ENCODE measurements at regions of chr1 and their contacts with region 1.

Region 1: GRCh38 chr1:33127001-33127791 is 46.2 kb downstream of the AZIN2 start:
- DNase-seq: peak; percentile 99
- H3K4me3 Mint-ChIP-seq: peak overlapping the region; percentile 96
- H3K27ac Mint-ChIP-seq: peak overlapping the region; percentile 96
- H3K4me1 Mint-ChIP-seq: peaks cover 45% of the 10 kb centered on the region
- H3K27me3 Mint-ChIP-seq: no peaks in the 10 kb centered on the region

Region 2: DNA sequence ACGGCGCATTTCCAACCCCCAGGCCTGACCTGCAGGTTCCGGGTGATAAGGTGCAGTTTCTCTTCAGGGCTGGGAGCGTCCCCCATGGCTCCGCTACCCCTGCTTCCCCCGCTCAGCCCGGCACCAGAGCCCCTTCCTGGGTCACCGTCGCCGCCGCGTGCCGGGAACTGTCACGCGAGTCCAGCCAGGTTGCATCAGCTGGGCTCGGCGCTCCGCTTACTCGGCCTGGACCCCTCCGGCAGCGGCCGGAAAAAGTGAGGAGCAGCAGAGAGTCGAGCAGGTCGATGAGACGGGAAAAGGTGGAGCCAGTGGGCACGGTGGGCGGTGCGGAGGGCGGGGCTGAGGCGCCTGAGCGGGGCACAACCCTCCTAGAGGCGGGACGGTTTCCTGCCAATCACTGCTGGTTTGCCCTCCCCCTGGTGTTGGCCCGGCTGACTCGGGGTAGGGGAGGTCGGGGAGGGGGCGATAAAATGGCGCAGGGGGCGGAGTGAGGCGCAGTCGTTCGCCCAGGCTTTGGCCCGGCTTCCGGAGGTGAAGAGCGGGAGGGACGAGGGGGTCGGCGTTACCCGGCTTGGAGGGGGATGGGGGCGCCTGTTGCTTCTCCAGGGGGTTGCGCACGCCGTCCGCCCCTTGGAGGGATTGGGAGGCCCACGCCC is 309.9 kb before region 1 on chr1 and contains the starts of genes S100PBP and YARS1:
- intact Hi-C with region 1: loop called (anchors 1 kb)
- DNase-seq: peak; percentile 100
- H3K4me3 Mint-ChIP-seq: peak within 1 kb of the TSS; percentile 97
- H3K27ac Mint-ChIP-seq: peak within 1 kb of the TSS; percentile 97
- H3K4me1 Mint-ChIP-seq: peaks cover 53% of the 10 kb centered on the region
- H3K27me3 Mint-ChIP-seq: no peaks in the 10 kb centered on the region
- total RNA-seq, gene S100PBP: 48.8 and 55.8 TPM in 2 replicates
- total RNA-seq, gene YARS1: 205 and 225 TPM in 2 replicates

Region 3: DNA sequence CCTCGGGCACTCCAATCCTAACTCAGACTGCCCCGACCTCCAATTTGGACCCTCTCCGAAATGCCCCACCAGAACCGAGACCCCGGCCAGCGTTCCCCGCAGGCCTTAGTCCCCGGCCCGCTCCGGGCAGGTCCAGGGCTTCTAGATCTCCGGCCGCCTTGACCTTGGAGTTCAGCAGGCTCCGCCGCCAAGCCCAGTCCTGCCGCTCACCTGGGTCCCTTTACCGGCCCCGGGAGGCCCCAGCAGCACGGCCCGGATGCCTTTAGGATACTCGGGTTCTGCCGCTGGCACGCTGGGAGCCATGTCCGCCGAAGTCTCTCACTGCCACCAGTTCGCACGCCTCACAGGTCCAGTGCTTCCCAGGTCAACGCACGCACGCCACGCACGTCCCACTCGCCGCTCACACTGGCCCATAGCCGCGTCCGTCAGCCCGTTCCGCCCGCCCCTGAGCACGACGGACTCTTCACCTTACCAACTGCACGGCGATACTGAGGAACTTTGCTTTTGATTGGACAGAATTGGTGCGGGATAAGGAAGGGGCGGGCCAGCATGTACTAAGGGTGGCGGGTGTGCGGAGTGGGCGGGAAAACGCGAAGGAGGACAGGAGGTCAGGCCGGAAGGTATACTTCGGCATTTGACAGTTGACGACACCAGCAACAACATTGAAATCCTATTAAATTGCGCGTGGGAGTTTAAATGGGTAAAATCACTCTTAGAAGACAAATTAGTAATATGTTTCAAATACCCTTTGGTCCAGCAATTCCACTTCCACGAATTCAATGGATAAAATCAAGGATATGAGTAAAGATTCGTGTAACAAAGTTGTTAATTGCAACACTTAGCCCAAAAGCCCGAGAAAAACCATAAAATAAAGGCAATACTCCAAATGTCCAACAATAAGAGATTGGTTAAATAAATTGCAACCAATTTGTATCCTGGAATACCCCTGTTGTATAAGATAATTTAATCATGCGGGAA is 90.4 kb before region 1 on chr1 and contains the start of gene AK2:
- intact Hi-C with region 1: loop called (anchors 1 kb)
- DNase-seq: peak; percentile 91
- H3K4me3 Mint-ChIP-seq: peak within 1 kb of the TSS; percentile 91
- H3K27ac Mint-ChIP-seq: peak within 1 kb of the TSS; percentile 90
- H3K4me1 Mint-ChIP-seq: peaks cover 48% of the 10 kb centered on the region
- H3K27me3 Mint-ChIP-seq: no peaks in the 10 kb centered on the region
- total RNA-seq, gene AK2: 387 and 400 TPM in 2 replicates

Region 4: DNA sequence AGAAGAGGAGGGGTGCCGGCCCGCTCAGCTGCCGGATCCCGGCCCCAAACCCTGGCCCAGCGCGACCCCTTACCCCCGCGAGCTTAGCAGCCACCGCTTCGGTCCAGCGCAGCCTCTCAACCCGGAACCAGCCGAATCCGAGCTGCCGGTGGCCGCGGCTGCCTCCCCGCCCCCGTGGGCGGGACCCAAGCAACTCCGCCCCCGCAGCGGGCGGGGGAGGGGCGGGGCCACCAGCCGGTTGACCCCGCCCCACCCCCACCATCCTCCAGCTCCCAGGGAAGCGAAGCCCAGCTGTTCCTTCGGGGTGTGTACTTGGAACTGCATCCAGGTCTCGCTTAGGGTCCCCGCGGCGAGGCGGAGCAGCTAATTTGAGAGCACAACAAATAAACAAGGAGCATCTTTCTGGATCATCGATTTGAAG is 54.7 kb after region 1 on chr1 and contains the start of gene TRIM62:
- intact Hi-C with region 1: loop called (anchors 1 kb)
- DNase-seq: peak; percentile 69
- H3K4me3 Mint-ChIP-seq: peak within 1 kb of the TSS; percentile 87
- H3K27ac Mint-ChIP-seq: peak within 1 kb of the TSS; percentile 81
- H3K4me1 Mint-ChIP-seq: peaks cover 28% of the 10 kb centered on the region
- H3K27me3 Mint-ChIP-seq: peaks cover 19% of the 10 kb centered on the region
- total RNA-seq, gene TRIM62: 4.1 and 4.5 TPM in 2 replicates

Region 5: DNA sequence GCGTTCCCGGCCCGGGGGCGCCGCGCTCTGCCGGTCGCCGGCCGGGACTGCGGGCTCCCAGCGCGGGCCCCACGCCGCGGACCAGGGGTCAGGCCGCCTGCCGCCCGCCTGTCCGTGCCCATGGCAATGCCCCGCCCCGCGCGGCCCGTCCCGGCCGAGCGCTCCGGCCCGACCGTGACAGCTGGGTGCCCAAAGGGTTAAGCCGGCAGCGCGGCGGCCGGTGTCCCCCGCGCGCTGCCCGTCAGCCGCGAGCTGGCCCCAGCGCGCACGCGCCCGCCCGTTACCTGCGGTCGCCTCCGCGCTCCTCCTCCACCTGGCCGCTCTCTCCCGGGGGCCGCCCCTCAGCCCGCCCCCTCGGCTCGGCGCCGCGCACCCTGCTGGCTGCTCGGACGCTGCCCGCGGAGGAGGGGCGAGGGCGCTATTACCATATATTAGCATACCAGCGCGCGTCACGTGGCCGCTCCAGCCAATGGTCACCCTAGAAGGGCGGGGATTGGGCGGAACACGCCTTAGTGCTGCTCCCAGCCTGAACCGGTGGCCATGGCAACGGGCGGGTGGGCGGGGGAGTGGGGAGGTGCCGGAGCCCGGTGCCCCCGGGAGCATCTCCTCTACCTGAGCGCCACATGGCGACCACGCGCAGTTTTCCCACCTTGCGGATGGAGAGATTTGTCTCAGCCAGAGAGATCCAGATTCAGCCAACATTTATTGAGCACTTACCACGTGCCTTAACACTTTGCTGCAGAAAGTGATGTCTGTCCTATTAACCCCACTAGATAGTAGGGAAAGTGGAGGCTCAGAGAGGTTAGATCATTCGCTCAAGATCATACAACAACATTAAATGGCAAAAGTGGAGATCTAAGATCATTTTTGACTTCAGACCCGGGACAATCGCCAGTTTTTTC is 303.7 kb after region 1 on chr1 and contains the start of gene PHC2:
- intact Hi-C with region 1: loop called (anchors 2 kb)
- DNase-seq: peak; percentile 82
- H3K4me3 Mint-ChIP-seq: peak within 1 kb of the TSS; percentile 57
- H3K27ac Mint-ChIP-seq: no peak within 1 kb of the TSS
- H3K4me1 Mint-ChIP-seq: peaks cover 4% of the 10 kb centered on the region
- H3K27me3 Mint-ChIP-seq: peaks cover 26% of the 10 kb centered on the region
- total RNA-seq, gene PHC2: 36.7 and 40.1 TPM in 2 replicates